Adrenal gland (tissue), 19 donors: ENCODE measurements at regions of chr20 and their contacts with region 1.

Region 1: GRCh38 chr20:23350196-23350903 is at the start of gene NXT1:
- DNase-seq: peak; percentile 98 to 99 (median 98)
- H3K4me3 ChIP-seq: peak within 1 kb of the TSS; percentile 61 to 96 (median 79)
- H3K27ac ChIP-seq: peak within 1 kb of the TSS; percentile 95 to 100 (median 99)
- H3K4me1 ChIP-seq: peaks cover 0 to 24% of the 10 kb centered on the region in 2 donors
- H3K27me3 ChIP-seq: no peaks in the 10 kb centered on the region
- CTCF ChIP-seq: no peak
- POLR2A ChIP-seq: peak; percentile 81 to 93
- total RNA-seq, gene NXT1: 11.1 to 43.8 (median 17.9) TPM

Region 2: GRCh38 chr20:23613676-23614075 is 263.3 kb after region 1 on chr20:
- intact Hi-C with region 1: loop called in 1 of 2 experiments (anchors 5 kb)
- DNase-seq: no peak
- H3K4me3 ChIP-seq: no peak overlapping the region
- H3K27ac ChIP-seq: peak overlapping the region in 1 of 5 donors; percentile 40
- H3K4me1 ChIP-seq: no peaks in the 10 kb centered on the region
- H3K27me3 ChIP-seq: no peaks in the 10 kb centered on the region
- CTCF ChIP-seq: no peak
- POLR2A ChIP-seq: no peak

Region 3: DNA sequence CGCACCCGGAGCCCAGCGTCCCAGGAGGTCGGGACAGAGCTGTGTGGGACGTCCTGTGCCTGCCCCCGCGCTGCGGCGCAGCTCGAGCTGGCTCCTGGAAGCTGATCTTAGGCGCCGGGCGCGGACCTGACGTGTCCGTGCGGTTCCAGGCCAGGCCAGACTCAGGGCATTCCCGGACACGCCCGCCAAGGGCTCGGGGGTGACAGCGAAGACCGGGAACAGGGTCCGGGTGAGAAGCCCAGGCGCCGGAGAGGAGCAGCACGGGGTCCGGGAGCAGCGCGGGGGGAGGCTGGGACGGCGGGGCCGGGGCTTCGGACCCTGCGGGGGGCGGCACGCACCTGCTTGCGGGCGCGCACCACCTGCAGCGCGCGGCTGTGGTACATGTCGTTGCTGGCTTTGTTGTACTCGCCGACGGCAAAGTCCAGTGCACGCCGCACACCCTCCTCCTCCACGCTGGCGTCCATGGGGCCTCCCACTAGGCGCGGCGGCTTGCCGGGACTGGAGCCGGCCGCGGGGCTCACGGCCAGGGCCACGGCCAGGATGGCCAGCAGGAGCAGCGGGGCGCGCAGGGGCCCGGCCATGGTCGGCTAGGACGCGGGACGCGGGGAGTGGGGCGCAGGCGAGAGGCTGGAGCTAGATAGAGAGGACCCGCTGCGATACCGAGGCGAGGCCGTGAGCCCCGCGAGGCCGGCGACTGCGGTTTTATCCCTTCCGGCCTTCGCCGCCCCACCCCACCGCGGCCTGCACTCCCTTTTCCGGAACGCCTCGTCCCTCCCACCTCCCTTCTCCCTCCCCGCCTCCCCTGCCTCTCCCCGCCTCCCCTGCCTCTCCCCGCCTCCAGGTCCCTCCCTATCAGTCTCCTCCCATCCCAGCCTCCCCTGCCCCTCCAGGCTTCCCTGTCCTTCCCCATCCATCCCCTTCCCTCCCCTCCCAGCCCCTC is 287.2 kb after region 1 on chr20 and contains the start of gene CST3:
- intact Hi-C with region 1: loop called in 1 of 2 experiments (anchors 10 kb)
- DNase-seq: peak; percentile 88 to 95 (median 93)
- H3K4me3 ChIP-seq: peak within 1 kb of the TSS; percentile 48 to 96 (median 84)
- H3K27ac ChIP-seq: peak within 1 kb of the TSS; percentile 64 to 95 (median 90)
- H3K4me1 ChIP-seq: peaks cover 30 to 42% of the 10 kb centered on the region in 2 donors
- H3K27me3 ChIP-seq: no peaks in the 10 kb centered on the region
- CTCF ChIP-seq: no peak
- POLR2A ChIP-seq: peak; percentile 65 to 82
- total RNA-seq, gene CST3: 92.4 to 1,851 (median 1,207) TPM